Ascending aorta (tissue), 2 donors: ENCODE measurements at regions of chr2 and their contacts with region 1.

Region 1: GRCh38 chr2:135741395-135742324 is at the start of gene UBXN4:
- DNase-seq: peak; percentile 96 to 99
- H3K4me3 ChIP-seq: peak within 1 kb of the TSS; percentile 81 to 92
- H3K27ac ChIP-seq: peak within 1 kb of the TSS; percentile 99
- H3K4me1 ChIP-seq: peaks cover 0 to 17% of the 10 kb centered on the region in 2 donors
- H3K27me3 ChIP-seq: no peaks in the 10 kb centered on the region
- CTCF ChIP-seq: peak in 2 of 3 experiments; percentile 21 to 37
- total RNA-seq, gene UBXN4: 14.8 TPM

Region 2: GRCh38 chr2:134918526-134919340 is 822.9 kb before region 1 on chr2 and contains the start of gene CCNT2:
- intact Hi-C with region 1: loop called (anchors 1 kb)
- DNase-seq: peak; percentile 97 to 99
- H3K4me3 ChIP-seq: peak within 1 kb of the TSS; percentile 83 to 88
- H3K27ac ChIP-seq: peak within 1 kb of the TSS; percentile 96 to 98
- H3K4me1 ChIP-seq: peaks cover 5 to 25% of the 10 kb centered on the region in 2 donors
- H3K27me3 ChIP-seq: no peaks in the 10 kb centered on the region
- CTCF ChIP-seq: no peak
- total RNA-seq, gene CCNT2: 14.2 TPM

Region 3: DNA sequence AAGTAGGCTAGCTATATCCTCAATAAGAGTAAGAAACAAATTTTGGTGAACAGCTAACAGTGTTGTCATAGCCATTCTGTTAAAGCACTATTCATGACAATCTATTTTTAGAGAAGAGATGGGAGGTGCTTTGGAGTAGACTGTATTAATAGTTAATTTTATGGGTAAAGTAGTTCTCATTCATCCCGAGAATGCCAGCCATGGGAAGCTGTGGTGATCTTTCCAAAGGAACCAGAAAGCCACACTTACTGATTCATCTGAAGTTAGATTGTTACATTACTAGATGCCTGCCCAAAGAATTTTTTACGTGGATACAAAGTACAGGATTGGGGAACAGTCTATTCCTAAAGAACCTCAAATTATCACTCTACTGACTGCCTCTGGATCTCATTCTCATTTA is 285.2 kb before region 1 on chr2:
- intact Hi-C with region 1: no loop called
- DNase-seq: no peak
- H3K4me3 ChIP-seq: no peak overlapping the region
- H3K27ac ChIP-seq: no peak overlapping the region
- H3K4me1 ChIP-seq: no peaks in the 10 kb centered on the region
- H3K27me3 ChIP-seq: no peaks in the 10 kb centered on the region
- CTCF ChIP-seq: no peak

Region 4: DNA sequence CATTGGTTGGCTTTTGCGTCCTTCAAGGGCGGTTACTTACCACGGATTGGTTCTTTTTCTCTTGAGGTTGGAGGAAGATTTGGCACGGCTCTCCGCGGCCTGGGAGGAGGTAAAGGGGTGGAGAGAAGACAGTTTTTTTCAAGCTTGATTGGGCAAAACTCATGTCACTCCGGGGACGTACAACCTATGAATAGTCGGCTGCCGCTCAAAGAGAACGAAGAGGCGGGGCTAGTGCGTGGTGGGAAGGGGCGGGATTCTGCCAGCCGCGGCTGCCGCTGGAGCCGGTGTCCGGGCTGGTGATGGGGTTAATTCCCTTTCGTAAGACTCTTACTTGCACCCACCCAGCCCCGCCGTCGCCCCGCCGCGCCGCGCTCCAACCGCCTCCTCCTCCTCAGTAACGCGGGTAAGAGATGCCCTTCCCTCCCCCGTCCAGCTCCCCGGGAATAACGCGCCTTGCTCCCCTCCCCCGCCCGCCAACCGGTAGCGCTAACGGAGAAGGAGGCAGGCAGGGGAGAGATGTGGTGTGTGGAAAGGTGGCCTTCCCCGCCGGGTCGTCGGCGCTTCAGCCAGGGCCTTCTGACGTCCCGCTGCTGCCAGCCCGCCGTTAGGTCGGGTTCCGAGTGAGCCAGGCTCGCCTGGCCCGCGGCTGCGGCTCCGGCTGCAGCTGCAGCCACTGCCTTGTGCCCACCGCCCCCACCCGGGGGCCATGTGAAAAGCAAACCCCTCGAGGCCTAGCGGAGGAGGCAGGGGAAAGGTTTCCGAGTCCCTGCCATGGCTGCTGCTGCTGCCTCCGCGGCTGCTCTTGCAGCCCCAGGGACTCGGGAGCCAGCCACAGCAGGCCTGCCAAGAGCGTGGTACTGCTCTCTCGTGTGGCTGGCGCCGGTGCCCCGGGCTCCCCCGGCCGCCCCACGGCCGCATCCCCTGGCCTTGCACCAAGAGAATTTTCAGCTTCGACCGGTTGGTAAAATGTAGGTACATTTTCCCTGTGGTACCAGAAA is 210.1 kb before region 1 on chr2 and contains the start of gene R3HDM1:
- intact Hi-C with region 1: loop called (anchors 1 kb)
- DNase-seq: peak; percentile 97 to 100
- H3K4me3 ChIP-seq: peak within 1 kb of the TSS; percentile 78 to 82
- H3K27ac ChIP-seq: peak within 1 kb of the TSS; percentile 86 to 95
- H3K4me1 ChIP-seq: peaks cover 0 to 10% of the 10 kb centered on the region in 2 donors
- H3K27me3 ChIP-seq: no peaks in the 10 kb centered on the region
- CTCF ChIP-seq: peak in 1 of 3 experiments; percentile 4
- total RNA-seq, gene R3HDM1: 5.0 TPM

Region 5: GRCh38 chr2:135820003-135820618 is 78.5 kb after region 1 on chr2:
- intact Hi-C with region 1: no loop called
- DNase-seq: no peak
- H3K4me3 ChIP-seq: no peak overlapping the region
- H3K27ac ChIP-seq: no peak overlapping the region
- H3K4me1 ChIP-seq: no peaks in the 10 kb centered on the region
- H3K27me3 ChIP-seq: no peaks in the 10 kb centered on the region
- CTCF ChIP-seq: no peak

Region 6: GRCh38 chr2:135876066-135876711 is 134.5 kb after region 1 on chr2 and contains the start of gene MCM6:
- intact Hi-C with region 1: loop called (anchors 1 kb)
- DNase-seq: peak; percentile 92 to 98
- H3K4me3 ChIP-seq: peak within 1 kb of the TSS; percentile 82 to 83
- H3K27ac ChIP-seq: peak within 1 kb of the TSS; percentile 87 to 91
- H3K4me1 ChIP-seq: peaks cover 0 to 5% of the 10 kb centered on the region in 2 donors
- H3K27me3 ChIP-seq: no peaks in the 10 kb centered on the region
- CTCF ChIP-seq: no peak
- total RNA-seq, gene MCM6: 62.5 TPM

Region 7: GRCh38 chr2:136550181-136550580 is 808.5 kb after region 1 on chr2:
- intact Hi-C with region 1: no loop called
- DNase-seq: no peak
- H3K4me3 ChIP-seq: no peak overlapping the region
- H3K27ac ChIP-seq: no peak overlapping the region
- H3K4me1 ChIP-seq: no peaks in the 10 kb centered on the region
- H3K27me3 ChIP-seq: no peaks in the 10 kb centered on the region
- CTCF ChIP-seq: no peak